HepG2 (cell line): ENCODE measurements at regions of chr15 and their contacts with region 1.

Region 1: DNA sequence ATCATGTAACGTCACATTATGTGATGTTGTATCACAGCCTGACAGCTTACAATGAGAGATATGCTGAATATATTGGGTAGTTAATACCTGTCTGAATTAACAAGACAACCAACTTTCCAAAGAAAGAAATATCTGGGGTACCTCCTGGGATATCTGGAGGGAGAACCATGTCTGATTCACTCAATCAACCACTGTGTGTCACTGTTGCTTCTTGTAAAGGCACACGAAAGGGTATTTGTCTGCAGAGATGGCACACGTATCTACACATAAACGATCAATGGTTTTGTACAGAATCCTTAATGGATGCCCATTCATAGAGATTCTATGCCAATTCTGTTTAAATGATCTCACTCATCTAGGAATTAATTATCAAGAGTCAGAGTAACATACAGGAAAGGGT is 252.1 kb upstream of the TMCO5A start:
- DNase-seq: peak; percentile 5
- ATAC-seq: peak; percentile 55; the same call in 2 of the 3 replicates
- H3K4me3 ChIP-seq: no peak overlapping the region
- H3K27ac ChIP-seq: no peak overlapping the region
- H3K4me1 ChIP-seq: no peaks in the 10 kb centered on the region
- H3K27me3 ChIP-seq: no peaks in the 10 kb centered on the region
- CTCF ChIP-seq: peak; percentile 36
- EP300 ChIP-seq: no peak
- POLR2A ChIP-seq: no peak
- RAD21 ChIP-seq: no peak

Region 2: DNA sequence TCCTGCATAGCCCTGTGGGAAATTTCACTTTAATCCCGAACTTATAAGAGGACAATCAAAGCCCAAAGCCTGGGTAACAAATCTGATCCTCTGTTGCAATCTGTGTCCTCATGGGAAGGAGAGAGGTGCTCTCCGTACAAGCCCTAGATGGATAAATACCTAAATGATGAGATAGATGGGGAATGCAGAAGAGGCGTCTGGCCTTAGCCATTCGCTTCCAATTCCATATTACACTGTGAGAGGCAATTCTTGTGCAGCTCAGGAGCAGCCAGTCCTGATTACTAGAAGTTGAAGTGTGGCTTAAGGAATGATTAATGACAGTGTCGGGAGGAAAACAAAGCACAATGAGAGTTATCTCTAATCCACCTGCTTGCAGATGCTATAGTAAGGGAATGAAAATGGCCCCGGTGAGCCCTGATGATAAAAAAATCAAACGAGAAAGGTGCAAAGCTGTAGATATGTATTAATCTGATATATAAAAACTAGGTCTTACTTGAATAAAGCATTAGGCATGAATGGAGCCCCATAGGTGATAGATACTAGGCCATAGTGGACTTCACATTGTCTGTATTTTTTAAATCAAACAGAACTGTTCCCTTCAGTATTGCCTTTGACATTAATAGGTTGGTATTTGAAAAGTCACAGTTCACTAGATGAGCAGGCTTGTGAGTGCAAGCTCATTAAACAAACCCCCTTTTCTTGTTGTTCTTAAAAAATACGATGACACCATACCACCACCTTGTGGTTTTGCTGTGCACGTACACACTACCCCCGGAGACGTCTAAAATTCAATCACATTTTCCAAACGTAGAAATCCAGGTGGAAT is 197.9 kb after region 1 on chr15:
- CTCF ChIA-PET with region 1: interaction called, 4 read pairs
- POLR2A ChIA-PET with region 1: no interaction called
- in situ Hi-C with region 1: no loop called
- intact Hi-C with region 1: loop called (anchors 1 kb)
- DNase-seq: peak; percentile 7
- ATAC-seq: peak; percentile 52
- H3K4me3 ChIP-seq: no peak overlapping the region
- H3K27ac ChIP-seq: no peak overlapping the region
- H3K4me1 ChIP-seq: no peaks in the 10 kb centered on the region
- H3K27me3 ChIP-seq: no peaks in the 10 kb centered on the region
- CTCF ChIP-seq: peak; percentile 66
- EP300 ChIP-seq: no peak
- POLR2A ChIP-seq: no peak
- RAD21 ChIP-seq: no peak

Region 3: GRCh38 chr15:37891766-37892368 is 209.6 kb after region 1 on chr15:
- CTCF ChIA-PET with region 1: interaction called, 7 read pairs
- POLR2A ChIA-PET with region 1: no interaction called
- in situ Hi-C with region 1: no loop called
- intact Hi-C with region 1: loop called (anchors 1 kb)
- DNase-seq: peak; percentile 23
- ATAC-seq: peak; percentile 76
- H3K4me3 ChIP-seq: no peak overlapping the region
- H3K27ac ChIP-seq: no peak overlapping the region
- H3K4me1 ChIP-seq: no peaks in the 10 kb centered on the region
- H3K27me3 ChIP-seq: peaks cover 0 to 3% of the 10 kb centered on the region in 2 experiments; a peak in 1 of 5 replicates
- CTCF ChIP-seq: peak; percentile 66
- EP300 ChIP-seq: no peak
- POLR2A ChIP-seq: no peak
- RAD21 ChIP-seq: 0 out of 2 replicates have a peak, but pooled peaks have one; percentile 14